ENCODE measurements at regions of chr12 and their contacts with region 1.

Region 1: DNA sequence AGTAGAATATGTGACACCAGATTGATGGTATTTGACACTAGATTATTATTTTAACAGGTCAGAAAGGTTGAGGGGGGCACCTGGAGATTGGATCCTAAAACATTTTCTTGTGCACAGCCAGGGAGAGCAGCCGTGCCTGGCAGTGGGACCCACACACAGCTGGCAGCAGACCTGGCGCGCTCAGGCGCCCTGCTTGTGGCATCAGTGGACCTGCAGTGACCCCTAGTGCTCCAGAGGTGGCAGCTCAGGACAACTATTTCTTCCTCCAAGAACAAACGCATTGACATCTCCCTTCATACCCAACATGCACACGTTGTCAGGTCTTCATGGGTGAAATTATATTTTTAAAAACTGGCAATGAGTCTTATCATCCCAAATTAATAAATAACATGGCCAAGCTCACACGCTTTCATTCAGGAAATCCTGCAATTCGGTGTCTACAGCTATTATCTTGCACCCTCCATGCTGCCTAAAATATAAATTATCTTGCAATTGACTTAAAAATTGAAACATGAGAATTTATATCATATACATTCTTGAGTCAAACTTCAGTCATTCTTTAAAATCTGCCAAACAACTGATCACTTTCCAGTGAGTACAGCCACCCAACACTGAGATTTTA is 7.7 kb upstream of the TMEM132D start:
- DNase-seq: no peak
- ATAC-seq: no peak
- H3K4me3 ChIP-seq: no peak overlapping the region
- H3K27ac ChIP-seq: no peak overlapping the region
- H3K4me1 ChIP-seq: no peaks in the 10 kb centered on the region
- H3K27me3 ChIP-seq: peaks cover 0 to 3% (median 0%) of the 10 kb centered on the region in 3 donors
- CTCF ChIP-seq: peak in 3 of 5 experiments; percentile 24 to 41 (median 36)
- POLR2A ChIP-seq: no peak

Region 2: DNA sequence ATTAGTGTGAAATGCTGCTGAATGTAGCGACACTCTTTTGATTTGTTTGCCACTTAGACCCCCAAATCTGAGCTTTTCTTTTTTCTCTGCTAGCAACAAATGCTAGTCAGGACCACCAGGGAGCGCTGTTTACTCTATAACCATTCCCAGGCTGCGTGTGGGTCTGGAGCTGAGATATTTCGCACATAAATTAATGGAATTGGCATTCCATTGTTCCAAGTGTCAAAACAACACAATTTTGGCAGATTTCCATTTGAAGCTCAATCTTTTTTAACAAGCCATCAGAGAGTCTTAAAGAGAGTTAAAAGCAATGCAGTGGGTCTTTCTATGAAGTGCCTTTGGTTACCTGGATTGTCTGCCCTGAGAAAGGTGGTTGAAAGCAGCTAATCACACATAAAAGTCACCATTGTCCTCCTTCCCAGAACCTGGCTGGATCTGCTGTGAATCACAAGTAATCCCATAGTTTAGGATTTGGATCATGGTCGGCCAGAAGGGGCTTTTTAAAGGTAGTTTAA is 1651.9 kb before region 1 on chr12:
- in situ Hi-C with region 1: loop called in 1 of 4 experiments (anchors 25 kb)
- intact Hi-C with region 1: no loop called
- DNase-seq: no peak
- ATAC-seq: no peak
- H3K4me3 ChIP-seq: no peak overlapping the region
- H3K27ac ChIP-seq: no peak overlapping the region
- H3K4me1 ChIP-seq: no peaks in the 10 kb centered on the region
- H3K27me3 ChIP-seq: peaks cover 0 to 6% (median 0%) of the 10 kb centered on the region in 3 donors
- CTCF ChIP-seq: peak in 3 of 5 experiments; percentile 27 to 46 (median 39)
- POLR2A ChIP-seq: no peak

Measured in gastrocnemius medialis (tissue), 4 donors.